T-cell (primary cell): ENCODE measurements at regions of chr6 and their contacts with region 1.

Region 1: GRCh38 chr6:135145063-135145800 is 35.9 kb upstream of the MYB start:
- DNase-seq: peak in 6 of 35 experiments; percentile 4 to 66 (median 10)
- ATAC-seq: peak; percentile 42 to 65 (median 52)
- H3K4me3 ChIP-seq: no peak overlapping the region
- H3K4me3 Mint-ChIP-seq: peak overlapping the region; percentile 38 to 42 (median 38)
- H3K27ac ChIP-seq: peak overlapping the region; percentile 18
- H3K27ac Mint-ChIP-seq: peak overlapping the region; percentile 82 to 87
- H3K4me1 ChIP-seq: peaks cover 0 to 7% of the 10 kb centered on the region in 2 experiments
- H3K4me1 Mint-ChIP-seq: peaks cover 41 to 52% (median 42%) of the 10 kb centered on the region in 3 donors
- H3K27me3 ChIP-seq: no peaks in the 10 kb centered on the region
- H3K27me3 Mint-ChIP-seq: no peaks in the 10 kb centered on the region

Region 2: DNA sequence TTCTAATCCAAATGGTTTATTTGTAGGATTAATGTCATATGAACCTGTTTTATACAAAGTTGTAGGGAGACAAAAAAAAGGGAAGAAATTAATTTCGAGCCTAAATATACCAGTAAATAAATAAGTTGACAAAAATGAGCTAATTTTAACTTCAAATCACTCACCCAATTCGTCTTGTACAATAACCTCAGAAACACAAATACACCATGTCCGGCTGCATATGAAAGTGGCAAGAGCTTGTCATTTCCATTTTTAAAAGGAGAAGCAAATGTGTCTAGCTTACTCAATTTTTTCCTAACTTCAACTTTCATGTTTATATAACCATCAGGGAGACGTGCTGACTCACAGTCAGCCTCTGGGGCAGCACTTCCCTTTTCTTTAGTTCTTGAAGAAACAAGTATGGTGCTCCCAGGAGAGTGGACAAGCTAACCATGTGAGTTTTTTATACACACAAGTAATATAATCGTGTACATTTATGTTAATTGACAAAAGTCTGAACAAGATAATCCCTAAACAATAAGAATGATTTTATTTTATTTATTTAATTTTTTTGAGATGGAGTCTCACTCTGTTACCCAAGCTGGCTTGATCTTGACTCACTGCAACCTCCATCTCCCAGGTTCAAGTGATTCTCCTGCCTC is 771.8 kb before region 1 on chr6:
- CTCF ChIA-PET with region 1: no interaction called
- POLR2A ChIA-PET with region 1: no interaction called
- DNase-seq: peak in 1 of 35 experiments; percentile 36
- ATAC-seq: peak in 1 of 4 experiments; percentile 27
- H3K4me3 ChIP-seq: no peak overlapping the region
- H3K4me3 Mint-ChIP-seq: peak overlapping the region in 1 of 3 donors; percentile 3
- H3K27ac ChIP-seq: no peak overlapping the region
- H3K27ac Mint-ChIP-seq: no peak overlapping the region
- H3K4me1 ChIP-seq: peaks cover 5 to 15% of the 10 kb centered on the region in 2 experiments
- H3K4me1 Mint-ChIP-seq: peaks cover 20 to 33% (median 30%) of the 10 kb centered on the region in 3 donors
- H3K27me3 ChIP-seq: no peaks in the 10 kb centered on the region
- H3K27me3 Mint-ChIP-seq: no peaks in the 10 kb centered on the region

Region 3: GRCh38 chr6:135128268-135128914 is 16.8 kb before region 1 on chr6:
- CTCF ChIA-PET with region 1: interaction called, 5 to 10 read pairs
- POLR2A ChIA-PET with region 1: no interaction called
- DNase-seq: peak in 32 of 35 experiments; percentile 6 to 76 (median 28)
- ATAC-seq: peak; percentile 67 to 98 (median 81)
- H3K4me3 ChIP-seq: no peak overlapping the region
- H3K4me3 Mint-ChIP-seq: peak overlapping the region; percentile 62 to 85 (median 65)
- H3K27ac ChIP-seq: peak overlapping the region; percentile 77
- H3K27ac Mint-ChIP-seq: peak overlapping the region; percentile 97
- H3K4me1 ChIP-seq: peaks cover 8 to 23% of the 10 kb centered on the region in 2 experiments
- H3K4me1 Mint-ChIP-seq: peaks cover 35 to 37% (median 36%) of the 10 kb centered on the region in 3 donors
- H3K27me3 ChIP-seq: no peaks in the 10 kb centered on the region
- H3K27me3 Mint-ChIP-seq: no peaks in the 10 kb centered on the region

Region 4: DNA sequence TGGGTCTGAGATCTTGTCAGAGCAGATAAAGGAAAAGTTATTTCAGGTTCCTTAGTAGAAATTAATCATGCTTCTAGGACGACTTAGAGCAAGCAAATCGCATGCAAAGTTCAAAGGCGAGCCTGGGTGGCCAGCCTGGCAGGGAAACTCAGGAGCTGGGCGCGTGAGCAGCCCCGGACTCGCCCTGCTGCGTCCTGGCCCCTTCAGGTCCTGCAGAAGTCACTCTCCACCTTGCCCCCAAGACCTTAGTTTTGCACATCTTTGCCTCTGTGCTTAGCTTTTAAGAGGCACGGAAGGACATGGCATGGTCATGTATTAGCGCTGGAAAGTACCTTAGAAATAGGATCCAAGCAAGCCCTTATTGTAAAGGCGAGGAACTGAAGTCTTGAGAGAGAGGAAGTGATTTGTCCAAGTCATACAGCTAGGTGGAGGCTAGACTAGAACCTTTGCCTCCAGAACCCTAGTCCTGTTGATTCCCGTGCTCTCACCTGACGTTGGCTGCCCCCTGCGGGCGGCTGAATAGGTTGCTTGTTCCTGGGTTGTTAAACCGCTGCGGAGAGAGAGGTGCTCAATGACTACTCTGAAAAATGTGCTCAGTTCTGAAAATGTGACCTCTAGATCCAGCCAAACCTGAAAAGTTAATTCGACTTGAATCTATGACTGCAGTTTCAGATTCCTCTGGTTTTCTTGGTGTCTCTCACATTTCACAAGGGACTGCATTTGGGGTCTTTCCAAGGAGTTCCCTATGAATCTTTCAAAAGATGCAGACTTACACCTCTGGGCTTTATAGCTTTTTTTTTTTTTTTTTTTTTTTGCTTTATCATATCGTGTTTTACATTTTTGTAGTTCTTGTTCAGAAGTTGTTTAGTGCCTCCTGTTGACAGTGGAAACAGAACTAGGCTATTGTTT is 38.6 kb after region 1 on chr6:
- CTCF ChIA-PET with region 1: interaction called, 18 read pairs
- POLR2A ChIA-PET with region 1: interaction called in 1 of 2 experiments, 3 read pairs
- DNase-seq: peak; percentile 59 to 84 (median 71)
- ATAC-seq: peak; percentile 45 to 55 (median 48)
- H3K4me3 ChIP-seq: peak overlapping the region; percentile 63 to 98
- H3K4me3 Mint-ChIP-seq: peak overlapping the region; percentile 83 to 94 (median 87)
- H3K27ac ChIP-seq: peak overlapping the region; percentile 5
- H3K27ac Mint-ChIP-seq: peak overlapping the region; percentile 74 to 81
- H3K4me1 ChIP-seq: peaks cover 12 to 21% of the 10 kb centered on the region in 2 experiments
- H3K4me1 Mint-ChIP-seq: peaks cover 17 to 29% (median 25%) of the 10 kb centered on the region in 3 donors
- H3K27me3 ChIP-seq: no peaks in the 10 kb centered on the region
- H3K27me3 Mint-ChIP-seq: no peaks in the 10 kb centered on the region

Region 5: GRCh38 chr6:135233686-135234489 is 88.7 kb after region 1 on chr6:
- CTCF ChIA-PET with region 1: no interaction called
- POLR2A ChIA-PET with region 1: no interaction called
- DNase-seq: no peak
- ATAC-seq: no peak
- H3K4me3 ChIP-seq: no peak overlapping the region
- H3K4me3 Mint-ChIP-seq: no peak overlapping the region
- H3K27ac ChIP-seq: no peak overlapping the region
- H3K27ac Mint-ChIP-seq: no peak overlapping the region
- H3K4me1 ChIP-seq: peaks cover 0 to 3% of the 10 kb centered on the region in 2 experiments
- H3K4me1 Mint-ChIP-seq: peaks cover 5 to 13% (median 7%) of the 10 kb centered on the region in 3 donors
- H3K27me3 ChIP-seq: no peaks in the 10 kb centered on the region
- H3K27me3 Mint-ChIP-seq: no peaks in the 10 kb centered on the region

Region 6: GRCh38 chr6:135314543-135314942 is 169.3 kb after region 1 on chr6:
- CTCF ChIA-PET with region 1: interaction called in 1 of 2 experiments, 10 read pairs
- POLR2A ChIA-PET with region 1: no interaction called
- DNase-seq: no peak
- ATAC-seq: no peak
- H3K4me3 ChIP-seq: no peak overlapping the region
- H3K4me3 Mint-ChIP-seq: no peak overlapping the region
- H3K27ac ChIP-seq: no peak overlapping the region
- H3K27ac Mint-ChIP-seq: no peak overlapping the region
- H3K4me1 ChIP-seq: no peaks in the 10 kb centered on the region
- H3K4me1 Mint-ChIP-seq: no peaks in the 10 kb centered on the region
- H3K27me3 ChIP-seq: no peaks in the 10 kb centered on the region
- H3K27me3 Mint-ChIP-seq: no peaks in the 10 kb centered on the region

Region 7: DNA sequence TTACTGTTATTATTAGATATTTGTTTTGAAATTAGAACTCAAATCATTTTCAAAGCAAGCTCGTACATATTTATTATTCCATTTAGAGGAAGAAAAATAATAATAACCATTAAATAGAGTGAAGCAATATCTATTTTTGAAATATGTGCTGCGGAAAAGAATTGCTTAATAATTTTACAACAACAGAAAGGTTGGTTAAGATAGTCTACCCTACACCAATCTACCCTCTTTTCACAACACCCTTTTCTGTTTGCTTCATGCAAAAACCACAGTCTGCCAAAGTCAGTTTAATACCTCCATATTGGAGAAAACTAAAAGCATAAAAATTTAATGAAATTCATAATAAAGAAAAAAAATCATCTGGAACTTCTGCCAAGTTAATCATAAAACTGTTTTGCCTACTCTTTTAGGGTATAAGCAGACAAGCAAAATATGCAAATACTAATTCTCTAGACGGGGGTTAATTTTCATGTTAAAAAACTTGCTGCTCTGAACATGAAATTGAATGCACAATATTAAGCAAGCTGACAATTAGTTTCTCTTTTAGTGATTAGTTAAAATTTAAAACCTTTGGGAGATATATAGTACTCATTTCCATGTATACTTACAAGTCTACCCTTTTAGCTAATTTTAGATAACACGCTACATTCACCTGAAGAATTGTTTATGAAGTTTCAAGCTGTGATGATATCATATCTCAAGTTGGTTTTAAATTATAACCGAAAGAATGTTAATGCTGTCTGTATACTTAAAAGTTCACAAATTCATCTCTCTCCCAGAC is 252.1 kb after region 1 on chr6:
- CTCF ChIA-PET with region 1: interaction called in 1 of 2 experiments, 10 read pairs
- POLR2A ChIA-PET with region 1: no interaction called
- DNase-seq: no peak
- ATAC-seq: no peak
- H3K4me3 ChIP-seq: no peak overlapping the region
- H3K4me3 Mint-ChIP-seq: no peak overlapping the region
- H3K27ac ChIP-seq: no peak overlapping the region
- H3K27ac Mint-ChIP-seq: no peak overlapping the region
- H3K4me1 ChIP-seq: no peaks in the 10 kb centered on the region
- H3K4me1 Mint-ChIP-seq: no peaks in the 10 kb centered on the region
- H3K27me3 ChIP-seq: no peaks in the 10 kb centered on the region
- H3K27me3 Mint-ChIP-seq: no peaks in the 10 kb centered on the region